Gastrocnemius medialis (tissue), 4 donors: ENCODE measurements at regions of chr12 and their contacts with region 1.

Region 1: DNA sequence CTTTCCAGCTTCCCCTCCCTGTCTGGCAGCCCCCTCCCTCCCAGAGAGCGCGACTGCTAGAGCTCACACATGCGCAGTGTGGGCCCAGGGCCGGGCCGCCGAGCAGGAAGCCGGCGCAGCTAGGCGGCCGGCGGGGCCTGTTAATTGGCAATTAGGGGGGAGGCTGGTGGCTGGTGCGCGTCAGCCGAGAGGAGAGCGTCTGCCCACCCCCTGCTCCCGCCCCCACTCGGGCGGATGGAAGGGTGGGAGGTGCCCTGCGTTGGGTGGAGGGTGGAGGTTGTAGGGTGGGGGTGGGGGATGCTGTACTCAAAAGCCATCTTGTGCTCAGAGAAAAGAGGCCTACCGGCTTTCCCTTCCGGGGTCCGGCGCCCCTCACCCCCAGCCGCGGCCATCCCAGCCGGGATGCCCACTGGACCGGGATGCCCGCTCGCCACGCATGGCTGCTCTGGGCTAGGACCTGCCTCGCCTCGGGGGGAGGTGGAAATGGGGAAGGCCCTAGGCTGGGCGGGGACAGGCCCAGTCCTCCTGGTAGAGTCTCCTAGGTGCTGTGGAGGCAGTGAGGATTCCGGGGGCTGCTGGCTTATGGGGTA is 9.2 kb downstream of the HOXC8 start:
- DNase-seq: peak; percentile 80 to 86
- ATAC-seq: peak; percentile 49 to 56
- H3K4me3 ChIP-seq: peak overlapping the region; percentile 62 to 70 (median 68)
- H3K27ac ChIP-seq: peak overlapping the region; percentile 94 to 100 (median 98)
- H3K4me1 ChIP-seq: peaks cover 59 to 71% of the 10 kb centered on the region in 2 donors
- H3K27me3 ChIP-seq: no peaks in the 10 kb centered on the region
- CTCF ChIP-seq: peak in 1 of 5 experiments; percentile 26
- POLR2A ChIP-seq: peak; percentile 84 to 89

Region 2: GRCh38 chr12:54005853-54006686 is 11.9 kb before region 1 on chr12:
- in situ Hi-C with region 1: no loop called
- intact Hi-C with region 1: loop called (anchors 1 kb)
- DNase-seq: peak; percentile 83 to 91
- ATAC-seq: peak; percentile 63 to 67
- H3K4me3 ChIP-seq: peak overlapping the region; percentile 24 to 82 (median 63)
- H3K27ac ChIP-seq: peak overlapping the region; percentile 94 to 100 (median 98)
- H3K4me1 ChIP-seq: peaks cover 31 to 64% of the 10 kb centered on the region in 2 donors
- H3K27me3 ChIP-seq: no peaks in the 10 kb centered on the region
- CTCF ChIP-seq: peak; percentile 91 to 99 (median 97)
- POLR2A ChIP-seq: no peak

Region 3: DNA sequence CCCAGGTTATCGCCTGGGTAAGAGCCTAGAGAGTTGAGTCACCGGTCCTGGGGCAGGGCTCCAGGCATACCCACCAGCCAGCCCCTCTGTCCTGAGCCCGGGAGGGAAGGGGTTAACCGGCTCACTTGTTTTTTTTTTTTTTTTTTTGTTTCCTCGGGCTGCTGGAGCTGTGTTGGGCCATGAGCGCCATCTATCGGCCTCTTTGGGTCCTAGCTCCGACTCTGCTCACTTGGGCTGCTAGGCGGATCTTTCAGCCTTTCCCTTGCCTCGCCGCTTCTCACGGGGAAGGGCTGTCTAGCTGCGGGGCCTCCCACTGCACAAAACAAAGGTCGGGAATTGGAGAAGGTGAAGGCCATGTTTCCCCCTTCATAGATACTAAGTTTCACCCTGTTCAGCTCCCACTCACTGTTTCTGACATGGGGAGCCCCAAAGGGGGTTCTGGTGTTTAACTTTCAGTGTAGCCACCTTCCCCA is 173.6 kb after region 1 on chr12:
- in situ Hi-C with region 1: loop called in 1 of 4 experiments (anchors 10 kb)
- intact Hi-C with region 1: no loop called
- DNase-seq: peak; percentile 66 to 84
- ATAC-seq: peak; percentile 67 to 76
- H3K4me3 ChIP-seq: peak overlapping the region in 1 of 4 donors; percentile 10
- H3K27ac ChIP-seq: peak overlapping the region; percentile 52 to 75 (median 72)
- H3K4me1 ChIP-seq: peaks cover 26 to 38% of the 10 kb centered on the region in 2 donors
- H3K27me3 ChIP-seq: no peaks in the 10 kb centered on the region
- CTCF ChIP-seq: peak; percentile 80 to 89 (median 82)
- POLR2A ChIP-seq: no peak

Region 4: GRCh38 chr12:54207484-54208294 is 189.7 kb after region 1 on chr12:
- in situ Hi-C with region 1: loop called in 1 of 4 experiments (anchors 10 kb)
- intact Hi-C with region 1: no loop called
- DNase-seq: peak; percentile 60 to 79
- ATAC-seq: peak; percentile 76 to 90
- H3K4me3 ChIP-seq: no peak overlapping the region
- H3K27ac ChIP-seq: peak overlapping the region in 1 of 4 donors; percentile 33
- H3K4me1 ChIP-seq: no peaks in the 10 kb centered on the region
- H3K27me3 ChIP-seq: no peaks in the 10 kb centered on the region
- CTCF ChIP-seq: peak; percentile 90 to 95 (median 95)
- POLR2A ChIP-seq: no peak